Dendritic cell treated with granulocyte-macrophage colony-stimulating factor and Interleukin-4, amounts not matched to agents 40 ng/mL and 50 ng/mL, for 4 days (primary cell): ENCODE measurements at regions of chrX and their contacts with region 1.

Region 1: GRCh38 chrX:72297953-72298730 is 7.6 kb downstream of the CITED1 start:
- H3K4me3 Mint-ChIP-seq: no peak overlapping the region
- H3K27ac Mint-ChIP-seq: no peak overlapping the region
- H3K4me1 Mint-ChIP-seq: no peaks in the 10 kb centered on the region
- H3K27me3 Mint-ChIP-seq: peaks cover 56% of the 10 kb centered on the region

Region 2: GRCh38 chrX:72069350-72070160 is 228.6 kb before region 1 on chrX:
- intact Hi-C with region 1: no loop called
- H3K4me3 Mint-ChIP-seq: no peak overlapping the region
- H3K27ac Mint-ChIP-seq: no peak overlapping the region
- H3K4me1 Mint-ChIP-seq: peaks cover 32% of the 10 kb centered on the region
- H3K27me3 Mint-ChIP-seq: peaks cover 23% of the 10 kb centered on the region

Region 3: GRCh38 chrX:72216973-72217372 is 81.2 kb before region 1 on chrX:
- intact Hi-C with region 1: no loop called
- H3K4me3 Mint-ChIP-seq: no peak overlapping the region
- H3K27ac Mint-ChIP-seq: no peak overlapping the region
- H3K4me1 Mint-ChIP-seq: no peaks in the 10 kb centered on the region
- H3K27me3 Mint-ChIP-seq: no peaks in the 10 kb centered on the region

Region 4: DNA sequence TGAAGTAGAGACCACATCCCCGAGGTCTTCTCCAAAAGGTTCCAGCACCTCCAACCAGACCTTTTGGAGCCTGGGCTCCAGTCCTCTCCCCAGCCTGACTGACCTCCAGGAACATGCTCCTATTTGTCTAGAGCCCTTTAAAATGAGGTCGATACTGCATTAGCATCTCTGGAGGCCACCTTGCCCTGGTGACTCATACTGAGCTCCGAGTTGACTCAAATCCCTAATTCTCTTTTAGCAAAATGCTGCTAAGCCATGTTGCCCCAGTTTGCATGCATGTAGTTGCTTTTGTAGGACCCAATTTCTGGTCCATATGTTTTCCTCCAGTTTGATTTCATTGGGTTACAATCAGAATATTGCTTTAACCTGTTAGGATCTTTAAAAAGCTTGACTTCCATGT is 51.0 kb after region 1 on chrX:
- intact Hi-C with region 1: no loop called
- H3K4me3 Mint-ChIP-seq: no peak overlapping the region
- H3K27ac Mint-ChIP-seq: no peak overlapping the region
- H3K4me1 Mint-ChIP-seq: no peaks in the 10 kb centered on the region
- H3K27me3 Mint-ChIP-seq: no peaks in the 10 kb centered on the region

Region 5: GRCh38 chrX:72540318-72540717 is 242.2 kb after region 1 on chrX:
- intact Hi-C with region 1: loop called (anchors 5 kb)
- H3K4me3 Mint-ChIP-seq: no peak overlapping the region
- H3K27ac Mint-ChIP-seq: no peak overlapping the region
- H3K4me1 Mint-ChIP-seq: no peaks in the 10 kb centered on the region
- H3K27me3 Mint-ChIP-seq: no peaks in the 10 kb centered on the region